Activated T-helper 2 cell treated with anti-CD3 and anti-CD28 coated beads, Interferon-gamma antibody, Interleukin-2, Interleukin-4, amounts not matched to agents 10 μg/mL and 5 μg/mL and 100 μg/mL, durations not matched to agents 14 hours and 24 hours and 36 hours (primary cell): ENCODE measurements at regions of chr5 and their contacts with region 1.

Region 1: DNA sequence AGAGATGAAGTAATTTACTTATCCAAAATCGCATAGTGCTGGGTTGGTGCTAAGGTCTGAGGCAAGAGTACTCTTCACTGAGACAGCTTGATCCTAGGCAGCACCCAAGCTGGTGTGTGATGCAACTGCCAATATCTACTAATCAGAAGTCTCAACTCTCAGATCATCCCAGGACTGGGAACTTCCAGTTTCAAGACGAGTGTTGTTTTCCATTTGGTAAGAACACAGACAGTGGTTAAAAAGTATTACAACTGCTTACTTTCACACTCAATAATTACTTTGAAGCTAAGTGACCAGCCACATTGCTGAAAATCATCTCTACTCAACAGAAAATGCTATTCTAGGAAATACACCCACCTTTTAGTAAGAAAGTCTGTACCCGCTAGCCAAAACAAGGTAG is 45.3 kb downstream of the FBXW11 start:
- DNase-seq: peak; percentile 15
- H3K4me3 Mint-ChIP-seq: no peak overlapping the region
- H3K27ac Mint-ChIP-seq: peak overlapping the region; percentile 65
- H3K4me1 Mint-ChIP-seq: peaks cover 69% of the 10 kb centered on the region
- H3K27me3 Mint-ChIP-seq: no peaks in the 10 kb centered on the region

Region 2: GRCh38 chr5:171984748-171985419 is 23.8 kb after region 1 on chr5:
- intact Hi-C with region 1: loop called (anchors 1 kb)
- DNase-seq: no peak
- H3K4me3 Mint-ChIP-seq: no peak overlapping the region
- H3K27ac Mint-ChIP-seq: peak overlapping the region; percentile 51
- H3K4me1 Mint-ChIP-seq: peaks cover 38% of the 10 kb centered on the region
- H3K27me3 Mint-ChIP-seq: no peaks in the 10 kb centered on the region

Region 3: DNA sequence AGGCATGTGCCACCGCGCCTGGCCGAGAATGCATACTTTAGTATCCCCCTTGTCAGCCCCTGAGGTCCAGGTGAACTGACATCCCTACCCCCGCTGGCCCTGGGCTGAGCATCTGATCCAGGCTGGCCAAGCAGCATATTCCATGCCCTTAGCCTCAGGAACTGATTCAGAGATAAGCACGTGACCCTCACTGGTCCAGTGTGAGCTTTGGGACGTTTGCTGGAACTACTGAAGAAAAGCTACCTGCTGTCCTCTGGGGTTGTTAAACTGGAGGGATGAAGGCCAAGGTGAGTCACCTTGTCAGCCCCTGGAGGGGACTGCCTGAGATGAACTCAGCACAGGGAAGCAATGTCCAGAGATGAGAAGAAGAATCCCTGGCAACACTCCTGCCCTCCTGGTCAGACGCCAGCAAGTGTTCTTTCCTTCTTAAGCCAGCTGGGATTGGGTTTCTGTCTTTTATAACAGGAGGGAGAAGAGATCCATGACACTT is 104.4 kb after region 1 on chr5:
- intact Hi-C with region 1: loop called (anchors 5 kb)
- DNase-seq: no peak
- H3K4me3 Mint-ChIP-seq: no peak overlapping the region
- H3K27ac Mint-ChIP-seq: no peak overlapping the region
- H3K4me1 Mint-ChIP-seq: peaks cover 34% of the 10 kb centered on the region
- H3K27me3 Mint-ChIP-seq: no peaks in the 10 kb centered on the region

Region 4: GRCh38 chr5:172235132-172235780 is 274.1 kb after region 1 on chr5:
- intact Hi-C with region 1: no loop called
- DNase-seq: no peak
- H3K4me3 Mint-ChIP-seq: no peak overlapping the region
- H3K27ac Mint-ChIP-seq: no peak overlapping the region
- H3K4me1 Mint-ChIP-seq: peaks cover 43% of the 10 kb centered on the region
- H3K27me3 Mint-ChIP-seq: peaks cover 6% of the 10 kb centered on the region